PC-9 (cell line): ENCODE measurements at regions of chr10 and their contacts with region 1.

Region 1: DNA sequence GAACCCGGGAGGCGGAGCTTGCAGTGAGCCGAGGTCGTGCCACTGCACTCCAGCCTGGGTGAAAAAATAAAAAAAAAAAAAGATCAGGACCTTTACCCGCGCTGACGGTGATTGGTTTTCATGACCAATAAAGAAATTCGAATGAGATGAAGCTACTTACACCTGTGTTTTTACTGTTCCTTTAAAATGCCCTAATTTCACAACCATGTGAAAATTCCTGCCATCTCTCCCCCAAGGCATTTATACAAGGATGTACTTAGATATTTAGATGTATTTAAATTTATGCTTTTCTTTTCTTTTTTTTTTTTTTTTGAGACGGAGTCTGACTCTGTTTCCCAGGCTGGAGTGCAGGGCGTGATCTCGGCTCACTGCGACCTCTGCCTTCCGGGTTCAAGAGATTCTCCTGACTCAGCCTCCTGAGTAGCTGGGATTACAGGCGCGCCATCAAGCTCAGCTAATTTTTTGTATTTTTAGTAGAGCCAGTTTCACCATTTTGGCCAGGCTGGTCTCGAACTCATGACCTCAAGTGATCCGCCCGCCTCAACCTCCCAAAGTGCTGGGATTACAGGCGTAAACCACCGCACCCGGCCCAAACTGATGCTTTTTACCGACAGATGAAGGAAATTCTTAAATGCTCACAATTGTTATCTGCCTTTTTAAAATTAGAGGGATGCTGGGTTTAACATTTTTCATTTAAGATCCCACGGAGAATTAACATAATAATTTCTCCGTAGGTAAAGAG is 3.1 kb upstream of the PHYH start:
- DNase-seq: no peak
- H3K4me3 ChIP-seq: peak overlapping the region; percentile 66; the same call in 1 of the 2 replicates
- H3K27ac ChIP-seq: no peak overlapping the region
- H3K4me1 ChIP-seq: peaks cover 5% of the 10 kb centered on the region; the same call in 1 of the 2 replicates
- H3K27me3 ChIP-seq: no peaks in the 10 kb centered on the region
- CTCF ChIP-seq: no peak

Region 2: DNA sequence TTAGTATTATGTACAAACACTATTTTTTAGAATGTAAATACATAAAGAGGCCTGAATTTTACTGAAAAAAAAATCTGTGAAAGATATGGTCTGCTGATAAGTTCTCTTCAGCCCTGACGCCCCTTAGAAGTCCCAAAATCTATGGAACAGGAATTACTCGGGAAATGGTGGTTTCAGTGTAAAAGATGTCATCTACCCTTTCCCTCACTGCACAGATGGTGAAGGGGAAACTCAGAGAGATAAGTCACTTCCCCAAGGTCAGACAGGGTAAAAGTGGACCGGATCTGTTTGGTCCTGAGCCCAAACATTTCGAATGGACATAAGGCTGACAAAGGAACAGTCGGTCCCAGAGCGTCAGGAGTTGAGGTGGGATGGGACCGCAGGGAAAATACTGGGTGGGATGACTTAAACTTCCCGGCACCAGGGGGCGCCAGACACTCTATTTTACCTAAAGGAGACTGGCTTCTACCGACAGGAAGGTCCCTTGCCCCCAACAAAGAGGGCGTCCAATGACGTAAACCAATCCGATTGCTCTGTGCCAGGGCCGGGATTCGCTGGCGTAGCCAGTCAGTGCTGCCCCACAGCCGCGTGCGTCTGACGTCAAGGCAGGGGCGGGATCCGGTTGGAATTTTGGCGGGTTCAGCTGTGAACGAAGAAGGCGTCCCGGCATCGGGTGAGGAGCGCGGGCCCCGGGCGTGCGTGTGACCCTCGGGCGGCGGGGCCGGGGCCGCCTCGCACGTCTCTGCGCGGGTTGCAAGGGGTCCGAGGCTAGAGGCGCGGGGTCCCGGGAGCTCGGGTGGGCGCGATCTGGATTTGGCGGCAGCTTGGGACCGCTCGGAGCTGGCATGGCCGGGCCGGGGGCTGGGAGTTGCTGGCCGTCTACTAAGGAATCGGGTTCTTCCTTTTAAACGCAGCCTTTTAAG is 141.8 kb before region 1 on chr10 and contains the start of gene MCM10:
- CTCF ChIA-PET with region 1: no interaction called
- POLR2A ChIA-PET with region 1: interaction called, 3 read pairs
- intact Hi-C with region 1: loop called (anchors 1 kb)
- DNase-seq: peak; percentile 95 to 97
- H3K4me3 ChIP-seq: peak within 1 kb of the TSS; percentile 77
- H3K27ac ChIP-seq: no peak within 1 kb of the TSS
- H3K4me1 ChIP-seq: peaks cover 14% of the 10 kb centered on the region; the same call in 1 of the 2 replicates
- H3K27me3 ChIP-seq: no peaks in the 10 kb centered on the region
- CTCF ChIP-seq: peak; percentile 80
- total RNA-seq, gene MCM10: 20.9 and 24.5 TPM in 2 replicates

Region 3: DNA sequence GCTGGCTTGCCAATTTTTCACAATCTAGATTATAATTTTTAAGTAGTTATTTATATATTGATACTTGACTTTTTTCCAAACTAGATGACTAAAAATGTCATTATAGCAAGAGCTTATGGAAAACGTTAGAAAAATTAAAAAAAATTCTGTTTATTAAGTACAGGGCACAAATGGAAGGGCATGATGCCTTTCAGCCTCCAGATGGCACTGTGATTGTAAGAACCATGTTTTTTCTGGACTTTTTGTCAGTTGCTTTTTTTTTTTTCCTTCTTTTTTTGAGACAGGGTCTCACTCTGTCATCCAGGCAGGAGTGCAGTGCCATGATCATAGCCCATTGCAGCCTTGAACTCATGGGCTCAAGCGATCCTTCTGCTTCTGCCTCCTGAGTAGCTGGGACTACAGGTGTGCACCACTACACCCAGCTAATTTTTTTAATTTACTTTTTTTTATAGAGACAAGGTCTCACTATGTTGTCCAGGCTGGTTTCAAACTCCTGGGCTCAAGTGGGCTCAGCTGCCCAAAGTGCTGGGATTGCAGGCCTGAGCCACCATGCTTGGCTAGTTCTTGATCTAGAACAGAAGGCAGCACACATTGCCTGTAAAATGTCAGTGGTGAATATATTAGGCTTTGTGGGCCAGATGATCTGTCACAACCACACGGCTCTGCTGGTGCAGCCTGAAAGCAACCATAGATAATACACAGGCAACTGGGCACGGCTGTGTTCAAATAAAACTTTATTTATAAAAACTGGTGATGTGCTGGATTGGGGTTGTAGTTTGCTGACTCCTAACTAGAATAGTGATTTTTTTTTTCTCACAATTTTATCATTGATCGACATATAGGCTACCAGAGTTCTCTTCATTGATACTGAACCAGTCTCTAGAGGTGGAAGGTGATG is 96.2 kb before region 1 on chr10:
- CTCF ChIA-PET with region 1: interaction called, 4 read pairs
- POLR2A ChIA-PET with region 1: no interaction called
- intact Hi-C with region 1: loop called (anchors 1 kb)
- DNase-seq: no peak
- H3K4me3 ChIP-seq: no peak overlapping the region
- H3K27ac ChIP-seq: no peak overlapping the region
- H3K4me1 ChIP-seq: no peaks in the 10 kb centered on the region
- H3K27me3 ChIP-seq: no peaks in the 10 kb centered on the region
- CTCF ChIP-seq: peak; percentile 60

Region 4: GRCh38 chr10:13219685-13220670 is 83.0 kb before region 1 on chr10:
- CTCF ChIA-PET with region 1: interaction called, 5 read pairs
- POLR2A ChIA-PET with region 1: no interaction called
- intact Hi-C with region 1: loop called (anchors 1 kb)
- DNase-seq: peak in 1 of 2 experiments; percentile 43
- H3K4me3 ChIP-seq: no peak overlapping the region
- H3K27ac ChIP-seq: no peak overlapping the region
- H3K4me1 ChIP-seq: no peaks in the 10 kb centered on the region
- H3K27me3 ChIP-seq: no peaks in the 10 kb centered on the region
- CTCF ChIP-seq: peak; percentile 47; the same call in 1 of the 2 replicates

Region 5: GRCh38 chr10:13440185-13441061 is 137.4 kb after region 1 on chr10:
- CTCF ChIA-PET with region 1: interaction called, 4 read pairs
- POLR2A ChIA-PET with region 1: no interaction called
- intact Hi-C with region 1: loop called (anchors 1 kb)
- DNase-seq: peak in 1 of 2 experiments; percentile 48
- H3K4me3 ChIP-seq: no peak overlapping the region
- H3K27ac ChIP-seq: no peak overlapping the region
- H3K4me1 ChIP-seq: no peaks in the 10 kb centered on the region
- H3K27me3 ChIP-seq: peaks cover 90% of the 10 kb centered on the region
- CTCF ChIP-seq: peak; percentile 69